K562 (cell line): ENCODE measurements at regions of chr1 and their contacts with region 1.

Region 1: DNA sequence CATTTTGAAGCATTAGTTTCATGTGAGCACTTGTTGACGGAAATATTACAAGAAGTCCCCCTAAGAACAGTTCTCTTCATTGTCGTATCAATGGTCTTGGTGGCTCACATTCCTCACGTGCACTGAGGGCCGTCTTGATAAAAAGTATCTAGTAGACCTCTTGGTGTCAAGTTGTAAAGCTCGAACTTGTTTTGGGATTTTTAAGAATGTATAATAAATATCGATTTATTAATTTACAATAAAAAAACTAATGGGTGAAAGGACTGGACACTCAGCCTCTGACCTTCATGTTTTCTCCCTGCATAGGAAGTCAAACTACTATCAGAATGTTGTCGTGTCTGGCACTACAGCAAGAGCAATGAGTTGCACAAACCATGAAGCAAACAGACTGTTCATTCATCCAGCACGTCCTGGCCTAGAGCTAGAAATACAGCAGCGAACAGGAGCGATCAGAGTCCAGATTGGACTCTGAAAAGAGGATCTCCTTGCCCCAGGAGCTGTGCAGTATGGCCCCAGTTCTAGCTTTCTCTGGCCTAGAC is 319.2 kb downstream of the SMYD3 start:
- DNase-seq: peak in 3 of 4 experiments; percentile 28 to 83 (median 65)
- ATAC-seq: peak; percentile 75
- H3K4me3 ChIP-seq: no peak overlapping the region
- H3K27ac ChIP-seq: peak overlapping the region; percentile 54
- H3K4me1 ChIP-seq: peaks cover 4 to 52% of the 10 kb centered on the region in 2 experiments; a peak in 4 of 5 replicates
- H3K27me3 ChIP-seq: no peaks in the 10 kb centered on the region
- CTCF ChIP-seq: no peak
- EP300 ChIP-seq: no peak; the same call in 1 of the 2 replicates
- POLR2A ChIP-seq: peak; percentile 51; the same call in 1 of the 2 replicates
- RAD21 ChIP-seq: 0 out of 4 replicates have a peak, but pooled peaks of 1 of the 2 experiments have one; percentile 8

Region 2: DNA sequence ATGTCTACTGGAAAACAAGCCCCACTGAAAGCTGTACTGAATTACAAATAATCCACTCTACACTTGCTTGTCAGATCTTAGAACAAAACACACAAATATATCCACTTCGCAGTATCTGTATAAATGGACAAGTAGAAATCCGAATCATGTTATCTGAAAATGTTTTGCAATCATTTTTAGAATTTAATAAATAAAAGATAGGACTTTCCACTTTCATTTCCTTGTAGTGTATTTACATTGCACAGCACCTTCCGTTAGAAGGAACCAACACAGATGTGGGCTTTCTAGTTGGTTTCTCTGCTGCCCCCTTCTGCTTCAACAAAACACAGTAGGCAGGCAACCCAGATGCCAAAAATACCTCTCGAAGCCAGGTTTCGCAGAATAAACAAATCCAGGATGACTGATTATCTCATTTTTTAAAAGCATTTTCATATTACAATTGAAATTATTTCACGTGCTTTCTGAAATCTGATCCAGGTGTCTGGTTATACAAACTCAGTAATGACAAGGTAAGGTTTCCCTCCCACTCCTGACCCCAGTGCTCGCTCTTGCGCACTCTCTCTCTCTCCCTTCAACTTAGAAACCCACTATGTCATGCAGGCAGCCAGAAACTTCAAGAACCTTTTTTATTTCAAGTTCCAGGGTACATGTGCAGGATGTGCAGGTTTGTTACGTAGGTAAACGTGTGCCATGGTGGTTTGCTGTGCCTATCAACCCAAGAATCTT is 70.7 kb before region 1 on chr1:
- CTCF ChIA-PET with region 1: no interaction called
- POLR2A ChIA-PET with region 1: no interaction called
- in situ Hi-C with region 1: no loop called
- intact Hi-C with region 1: loop called (anchors 2 kb)
- DNase-seq: peak; percentile 53 to 85 (median 63)
- ATAC-seq: peak; percentile 88
- H3K4me3 ChIP-seq: no peak overlapping the region
- H3K27ac ChIP-seq: peak overlapping the region; percentile 38; the same call in 1 of the 3 replicates
- H3K4me1 ChIP-seq: peaks cover 4 to 38% of the 10 kb centered on the region in 2 experiments; a peak in 4 of 5 replicates
- H3K27me3 ChIP-seq: no peaks in the 10 kb centered on the region
- CTCF ChIP-seq: peak; percentile 62 to 74 (median 72)
- EP300 ChIP-seq: no peak
- POLR2A ChIP-seq: no peak
- RAD21 ChIP-seq: peak; percentile 73 to 82; a peak in 3 of 4 replicates

Region 3: DNA sequence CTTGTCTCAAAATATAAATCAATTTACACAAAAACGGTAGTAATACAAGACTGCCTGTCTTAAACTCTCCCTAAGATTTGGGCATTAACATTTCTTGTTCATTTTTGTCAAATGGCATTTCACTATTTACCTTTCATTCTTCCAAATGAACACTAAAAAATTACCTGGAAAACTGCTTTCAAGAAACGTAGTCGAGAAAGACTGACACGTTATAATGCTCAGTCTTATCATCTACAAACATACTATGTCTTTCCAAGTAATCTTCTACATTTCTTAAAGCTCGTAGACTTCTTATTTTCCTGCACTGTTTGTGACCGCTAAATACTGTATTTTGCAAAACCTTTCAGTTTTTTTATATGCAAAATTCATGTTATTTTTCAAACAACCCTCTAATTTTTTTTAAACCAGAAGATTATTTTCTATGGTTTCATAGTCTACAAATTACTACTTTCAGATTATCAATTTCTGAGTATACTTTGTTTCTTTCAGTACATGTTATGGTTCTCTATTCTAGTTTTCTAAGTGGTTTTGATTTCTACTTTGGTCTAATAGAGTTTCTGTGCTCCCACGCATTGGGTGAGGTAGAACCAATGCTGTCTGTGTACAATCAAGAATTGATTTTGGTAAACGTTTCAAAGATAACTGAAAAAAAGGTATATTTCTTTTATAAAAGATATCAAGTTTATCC is 17.2 kb before region 1 on chr1:
- CTCF ChIA-PET with region 1: no interaction called
- POLR2A ChIA-PET with region 1: interaction called, 4 read pairs
- in situ Hi-C with region 1: no loop called
- intact Hi-C with region 1: loop called (anchors 2 kb)
- DNase-seq: peak; percentile 45 to 78 (median 58)
- ATAC-seq: peak; percentile 72
- H3K4me3 ChIP-seq: peak overlapping the region; percentile 3; the same call in 1 of the 2 replicates
- H3K27ac ChIP-seq: peak overlapping the region; percentile 78; the same call in 2 of the 3 replicates
- H3K4me1 ChIP-seq: peaks cover 21 to 53% of the 10 kb centered on the region in 2 experiments
- H3K27me3 ChIP-seq: no peaks in the 10 kb centered on the region
- CTCF ChIP-seq: no peak
- EP300 ChIP-seq: peak; percentile 94
- POLR2A ChIP-seq: no peak
- RAD21 ChIP-seq: 0 out of 4 replicates have a peak, but pooled peaks of 1 of the 2 experiments have one; percentile 7

Region 4: DNA sequence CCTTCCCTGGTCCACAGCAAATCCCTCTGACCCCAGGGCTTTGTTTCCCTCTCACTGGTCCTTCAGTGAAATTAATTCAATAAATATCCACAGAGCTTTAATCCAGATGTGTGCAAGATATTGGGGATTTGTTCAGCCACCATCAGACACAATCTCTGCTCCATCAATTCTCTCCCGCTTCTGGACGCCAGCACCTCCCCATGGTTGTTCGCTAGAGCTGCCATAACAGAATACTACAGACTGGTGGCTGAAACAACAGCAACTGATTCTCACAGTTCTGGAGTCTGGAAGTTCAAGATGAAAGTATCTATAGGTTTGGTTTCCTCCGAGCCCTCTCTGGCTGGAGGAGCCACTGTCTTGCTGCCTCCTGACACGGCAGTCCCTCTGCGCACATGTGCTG is 15.3 kb after region 1 on chr1:
- CTCF ChIA-PET with region 1: no interaction called
- POLR2A ChIA-PET with region 1: interaction called, 10 read pairs
- in situ Hi-C with region 1: no loop called
- intact Hi-C with region 1: no loop called
- DNase-seq: no peak
- ATAC-seq: peak; percentile 89
- H3K4me3 ChIP-seq: no peak overlapping the region
- H3K27ac ChIP-seq: no peak overlapping the region
- H3K4me1 ChIP-seq: peaks cover 0 to 15% of the 10 kb centered on the region in 2 experiments; a peak in 2 of 5 replicates
- H3K27me3 ChIP-seq: no peaks in the 10 kb centered on the region
- CTCF ChIP-seq: peak; percentile 45 to 69 (median 55); a peak in 5 of 6 replicates
- EP300 ChIP-seq: no peak
- POLR2A ChIP-seq: no peak
- RAD21 ChIP-seq: peak; percentile 13 to 74; a peak in 2 of 4 replicates